ENCODE measurements at regions of chr16 and their contacts with region 1.

Region 1: GRCh38 chr16:53358884-53359283 is 75.4 kb upstream of the RBL2 start:
- DNase-seq: no peak
- ATAC-seq: peak; percentile 60
- H3K4me3 Mint-ChIP-seq: peak overlapping the region; percentile 42
- H3K27ac Mint-ChIP-seq: no peak overlapping the region
- H3K4me1 Mint-ChIP-seq: peaks cover 11% of the 10 kb centered on the region
- H3K27me3 Mint-ChIP-seq: peaks cover 17% of the 10 kb centered on the region
- CTCF ChIP-seq: no peak

Region 2: GRCh38 chr16:53099318-53100130 is 259.4 kb before region 1 on chr16:
- CTCF ChIA-PET with region 1: no interaction called
- POLR2A ChIA-PET with region 1: interaction called, 10 read pairs
- intact Hi-C with region 1: no loop called
- DNase-seq: peak; percentile 43
- ATAC-seq: peak; percentile 43
- H3K4me3 Mint-ChIP-seq: peak overlapping the region; percentile 83
- H3K27ac Mint-ChIP-seq: peak overlapping the region; percentile 93
- H3K4me1 Mint-ChIP-seq: peaks cover 69% of the 10 kb centered on the region
- H3K27me3 Mint-ChIP-seq: no peaks in the 10 kb centered on the region
- CTCF ChIP-seq: no peak

Region 3: DNA sequence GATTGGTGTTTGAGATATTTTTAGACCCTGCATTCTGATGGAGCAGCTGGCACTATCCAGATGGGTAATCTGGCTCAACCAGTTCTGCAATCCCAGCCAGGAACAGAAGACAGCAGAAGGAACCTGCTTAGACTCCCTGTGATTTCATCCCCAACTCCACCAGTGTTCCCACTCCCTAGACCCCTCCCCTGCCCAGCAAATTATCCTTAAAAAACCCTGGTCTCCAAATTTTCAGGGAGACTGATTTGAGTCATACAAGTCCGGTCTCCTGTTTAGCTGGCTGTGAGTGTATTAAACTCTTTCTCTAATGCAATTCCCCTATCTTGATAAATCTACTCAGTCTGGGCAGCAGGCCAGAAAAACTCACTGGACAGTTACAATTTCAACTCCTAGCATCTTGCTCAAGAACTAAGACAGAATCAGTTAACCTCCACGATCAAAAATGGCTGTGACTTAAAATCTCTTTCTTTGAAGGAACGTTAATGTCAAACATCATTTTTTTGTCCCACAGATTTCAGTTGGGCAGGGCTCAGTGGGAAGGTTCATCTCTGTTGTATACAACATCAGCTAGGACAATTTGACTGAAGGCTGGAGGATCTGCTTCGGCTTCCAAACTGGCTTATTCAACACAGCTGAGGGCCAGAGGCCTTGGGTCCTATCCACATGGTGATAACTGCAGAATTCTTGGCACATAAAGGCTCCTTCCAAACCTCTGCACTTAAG is 70.5 kb after region 1 on chr16:
- CTCF ChIA-PET with region 1: no interaction called
- POLR2A ChIA-PET with region 1: no interaction called
- intact Hi-C with region 1: no loop called
- DNase-seq: no peak
- ATAC-seq: no peak
- H3K4me3 Mint-ChIP-seq: no peak overlapping the region
- H3K27ac Mint-ChIP-seq: no peak overlapping the region
- H3K4me1 Mint-ChIP-seq: peaks cover 8% of the 10 kb centered on the region
- H3K27me3 Mint-ChIP-seq: peaks cover 8% of the 10 kb centered on the region
- CTCF ChIP-seq: no peak

Region 4: DNA sequence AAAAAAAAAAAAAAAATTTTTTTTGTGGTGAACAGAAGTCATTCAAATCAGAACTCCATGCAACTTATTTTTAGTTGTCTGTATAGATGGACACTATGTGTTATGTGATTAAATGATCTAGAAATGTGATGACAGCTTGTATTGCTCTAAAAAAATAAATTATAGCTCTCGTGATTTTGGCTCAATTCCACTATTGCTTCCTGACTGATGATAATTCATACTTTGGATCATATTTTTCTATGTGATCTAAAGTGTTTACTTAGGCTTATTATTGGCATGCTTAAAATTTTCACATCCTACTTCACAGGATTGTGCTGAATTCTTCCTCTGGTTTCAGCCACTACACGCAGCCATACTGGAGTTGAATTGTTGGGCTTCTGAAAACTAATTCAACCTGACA is 267.9 kb after region 1 on chr16:
- CTCF ChIA-PET with region 1: no interaction called
- POLR2A ChIA-PET with region 1: no interaction called
- intact Hi-C with region 1: no loop called
- DNase-seq: no peak
- ATAC-seq: no peak
- H3K4me3 Mint-ChIP-seq: no peak overlapping the region
- H3K27ac Mint-ChIP-seq: no peak overlapping the region
- H3K4me1 Mint-ChIP-seq: peaks cover 11% of the 10 kb centered on the region
- H3K27me3 Mint-ChIP-seq: no peaks in the 10 kb centered on the region
- CTCF ChIP-seq: no peak